Panc1 (cell line): ENCODE measurements at regions of chr2 and their contacts with region 1.

Region 1: GRCh38 chr2:231514103-231514950 is 15.9 kb downstream of the NMUR1 start:
- DNase-seq: peak; percentile 75
- ATAC-seq: peak; percentile 100
- H3K4me3 ChIP-seq: peak overlapping the region; percentile 82 to 96
- H3K27ac ChIP-seq: peak overlapping the region; percentile 97
- H3K4me1 ChIP-seq: peaks cover 12% of the 10 kb centered on the region
- H3K27me3 ChIP-seq: no peaks in the 10 kb centered on the region
- CTCF ChIP-seq: no peak

Region 2: GRCh38 chr2:231463698-231464575 is 50.4 kb before region 1 on chr2 and contains the start of gene NCL:
- CTCF ChIA-PET with region 1: no interaction called
- POLR2A ChIA-PET with region 1: no interaction called
- in situ Hi-C with region 1: no loop called
- intact Hi-C with region 1: no loop called
- DNase-seq: peak; percentile 80
- ATAC-seq: peak; percentile 95
- H3K4me3 ChIP-seq: peak within 1 kb of the TSS; percentile 93 to 100
- H3K27ac ChIP-seq: peak within 1 kb of the TSS; percentile 98
- H3K4me1 ChIP-seq: peaks cover 19% of the 10 kb centered on the region
- H3K27me3 ChIP-seq: no peaks in the 10 kb centered on the region
- CTCF ChIP-seq: no peak
- total RNA-seq, gene NCL: 778 TPM

Region 3: GRCh38 chr2:231557571-231558237 is 43.4 kb after region 1 on chr2:
- CTCF ChIA-PET with region 1: interaction called, 3 read pairs
- POLR2A ChIA-PET with region 1: no interaction called
- in situ Hi-C with region 1: no loop called
- intact Hi-C with region 1: loop called (anchors 5 kb)
- DNase-seq: peak; percentile 50
- ATAC-seq: peak; percentile 97
- H3K4me3 ChIP-seq: no peak overlapping the region
- H3K27ac ChIP-seq: no peak overlapping the region
- H3K4me1 ChIP-seq: no peaks in the 10 kb centered on the region; the same call in none of the 2 replicates
- H3K27me3 ChIP-seq: no peaks in the 10 kb centered on the region
- CTCF ChIP-seq: peak; percentile 70; the same call in 1 of the 2 replicates

Region 4: DNA sequence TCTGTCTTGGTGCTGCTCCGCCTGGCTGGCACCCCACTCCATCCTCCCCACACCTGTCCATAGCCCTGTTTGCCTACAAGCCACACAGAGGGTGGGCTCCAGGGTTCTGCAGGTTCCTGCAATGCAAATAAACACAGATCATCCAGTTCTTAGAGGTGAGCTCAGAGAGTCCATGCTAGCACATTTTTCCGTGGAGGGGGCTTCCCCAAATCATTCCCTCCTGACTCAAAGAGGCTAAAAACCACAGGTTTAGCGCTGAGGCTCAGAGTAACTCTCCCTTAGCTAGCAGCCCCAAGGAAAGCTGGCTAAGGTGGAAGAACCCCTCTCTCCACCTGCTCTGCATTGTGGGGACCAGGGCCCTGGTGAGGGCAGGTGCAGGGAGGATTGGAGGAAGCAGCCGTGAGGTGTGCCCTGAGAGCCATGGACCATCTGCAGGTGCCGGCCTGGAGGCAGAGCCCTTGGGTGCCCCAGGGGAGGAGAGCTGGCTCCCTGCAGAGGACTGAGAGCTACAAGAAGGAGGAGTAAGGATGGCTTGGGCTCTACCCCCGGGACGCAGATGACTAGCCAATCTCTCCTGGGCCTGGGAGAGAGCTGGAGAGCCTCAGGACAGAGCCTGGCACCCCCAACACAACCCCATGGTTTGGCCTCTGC is 54.6 kb after region 1 on chr2:
- CTCF ChIA-PET with region 1: interaction called, 3 read pairs
- POLR2A ChIA-PET with region 1: interaction called, 15 read pairs
- in situ Hi-C with region 1: no loop called
- intact Hi-C with region 1: no loop called
- DNase-seq: no peak
- ATAC-seq: no peak
- H3K4me3 ChIP-seq: no peak overlapping the region
- H3K27ac ChIP-seq: no peak overlapping the region
- H3K4me1 ChIP-seq: no peaks in the 10 kb centered on the region
- H3K27me3 ChIP-seq: no peaks in the 10 kb centered on the region
- CTCF ChIP-seq: no peak

Region 5: DNA sequence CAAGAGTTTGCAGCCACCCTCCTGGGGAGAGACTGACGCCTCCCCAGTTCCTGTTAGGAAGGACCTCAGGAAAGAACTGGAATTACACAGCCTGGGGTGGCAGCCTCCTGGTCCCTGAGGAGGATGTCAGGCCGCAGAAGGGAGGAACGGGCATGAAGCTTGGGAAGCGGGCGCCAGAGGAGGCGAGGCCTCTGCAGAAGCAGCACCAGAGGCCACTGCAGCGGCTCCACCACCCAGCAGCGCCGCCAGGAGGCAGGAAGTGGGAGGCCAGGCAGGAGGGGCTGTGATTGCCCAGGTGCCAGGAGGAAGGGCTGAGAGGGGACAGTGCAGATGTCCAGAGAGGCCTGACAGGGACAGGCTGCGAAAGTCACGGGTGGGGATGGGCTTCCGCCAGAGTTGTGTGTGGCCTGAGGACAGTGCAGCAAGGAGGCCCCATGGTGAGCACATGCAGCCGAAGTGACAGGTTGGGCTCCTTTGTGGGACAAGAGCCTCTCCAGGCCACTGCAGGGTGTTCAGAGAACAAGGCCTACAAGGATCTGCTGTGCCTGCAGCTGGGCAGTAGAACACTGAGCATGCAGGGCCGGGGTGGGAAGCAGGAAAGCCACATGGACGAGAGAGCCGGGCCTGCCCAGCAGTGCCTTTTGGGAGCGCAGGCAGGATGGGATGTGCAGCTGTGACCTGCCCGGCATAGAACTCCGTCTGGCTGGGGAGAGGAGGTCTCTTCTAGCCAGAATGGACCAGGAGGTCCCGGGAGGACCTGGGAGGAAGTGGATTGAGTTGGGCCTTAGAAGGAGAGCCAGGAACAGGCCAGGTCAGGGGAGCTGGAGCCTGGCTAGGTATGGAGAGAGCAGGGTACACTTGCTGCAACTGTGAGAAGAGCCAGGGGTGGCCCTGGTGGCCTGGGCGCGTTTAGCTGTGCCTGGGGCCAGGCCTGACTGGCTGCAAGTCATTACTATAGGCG is 825.1 kb after region 1 on chr2:
- CTCF ChIA-PET with region 1: no interaction called
- POLR2A ChIA-PET with region 1: no interaction called
- in situ Hi-C with region 1: no loop called
- intact Hi-C with region 1: no loop called
- DNase-seq: no peak
- ATAC-seq: no peak
- H3K4me3 ChIP-seq: no peak overlapping the region
- H3K27ac ChIP-seq: no peak overlapping the region
- H3K4me1 ChIP-seq: no peaks in the 10 kb centered on the region; the same call in 1 of the 2 replicates
- H3K27me3 ChIP-seq: no peaks in the 10 kb centered on the region
- CTCF ChIP-seq: no peak; the same call in 1 of the 2 replicates